Naive thymus-derived CD4-positive, alpha-beta T cell (primary cell): ENCODE measurements at regions of chr11 and their contacts with region 1.

Region 1: GRCh38 chr11:94504689-94505293 is 7.5 kb upstream of the C11orf97 start:
- DNase-seq: peak in 7 of 9 donors; percentile 15 to 54 (median 47)
- ATAC-seq: peak; percentile 70
- H3K4me3 ChIP-seq: no peak overlapping the region
- H3K4me3 Mint-ChIP-seq: no peak overlapping the region
- H3K27ac ChIP-seq: no peak overlapping the region
- H3K27ac Mint-ChIP-seq: no peak overlapping the region
- H3K4me1 ChIP-seq: no peaks in the 10 kb centered on the region
- H3K4me1 Mint-ChIP-seq: peaks cover 0 to 4% (median 0%) of the 10 kb centered on the region in 7 donors
- H3K27me3 ChIP-seq: peaks cover 0 to 3% of the 10 kb centered on the region in 2 donors
- H3K27me3 Mint-ChIP-seq: peaks cover 0 to 21% (median 3%) of the 10 kb centered on the region in 5 donors

Region 2: DNA sequence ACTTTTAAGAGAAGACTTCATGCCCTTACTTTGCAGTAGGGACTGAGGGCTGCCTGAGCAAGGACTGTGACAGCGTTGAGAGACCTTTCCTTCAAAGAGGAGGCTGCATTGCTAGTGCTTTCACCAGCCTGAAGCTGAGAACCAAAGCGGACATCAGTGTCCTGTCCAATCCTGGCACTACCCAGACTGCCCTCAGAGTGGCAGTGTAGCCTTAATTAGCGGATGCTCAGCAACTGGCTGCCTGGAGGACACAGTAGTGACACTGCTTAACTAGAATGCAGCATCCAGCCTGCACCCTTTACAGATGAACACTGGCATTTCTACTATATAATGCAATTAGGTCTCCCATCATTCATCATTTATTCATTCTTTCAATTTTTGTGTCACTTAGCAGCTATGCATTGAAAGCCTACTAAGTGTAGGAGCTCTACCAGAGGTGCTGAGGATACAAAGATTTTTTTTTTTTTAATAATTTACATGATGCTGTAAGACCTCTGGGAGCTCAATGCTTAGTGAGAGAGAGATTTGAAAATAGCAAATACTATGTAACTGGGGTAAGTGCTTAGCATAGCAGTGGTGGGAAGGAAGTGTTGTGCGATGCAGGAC is 1270.1 kb before region 1 on chr11:
- CTCF ChIA-PET with region 1: interaction called, 4 read pairs
- POLR2A ChIA-PET with region 1: no interaction called
- intact Hi-C with region 1: loop called (anchors 1 to 10 kb)
- DNase-seq: peak; percentile 16 to 62 (median 50)
- ATAC-seq: peak; percentile 97
- H3K4me3 ChIP-seq: no peak overlapping the region
- H3K4me3 Mint-ChIP-seq: no peak overlapping the region
- H3K27ac ChIP-seq: no peak overlapping the region
- H3K27ac Mint-ChIP-seq: no peak overlapping the region
- H3K4me1 ChIP-seq: no peaks in the 10 kb centered on the region
- H3K4me1 Mint-ChIP-seq: no peaks in the 10 kb centered on the region
- H3K27me3 ChIP-seq: no peaks in the 10 kb centered on the region
- H3K27me3 Mint-ChIP-seq: peaks cover 27 to 46% (median 40%) of the 10 kb centered on the region in 5 donors

Region 3: DNA sequence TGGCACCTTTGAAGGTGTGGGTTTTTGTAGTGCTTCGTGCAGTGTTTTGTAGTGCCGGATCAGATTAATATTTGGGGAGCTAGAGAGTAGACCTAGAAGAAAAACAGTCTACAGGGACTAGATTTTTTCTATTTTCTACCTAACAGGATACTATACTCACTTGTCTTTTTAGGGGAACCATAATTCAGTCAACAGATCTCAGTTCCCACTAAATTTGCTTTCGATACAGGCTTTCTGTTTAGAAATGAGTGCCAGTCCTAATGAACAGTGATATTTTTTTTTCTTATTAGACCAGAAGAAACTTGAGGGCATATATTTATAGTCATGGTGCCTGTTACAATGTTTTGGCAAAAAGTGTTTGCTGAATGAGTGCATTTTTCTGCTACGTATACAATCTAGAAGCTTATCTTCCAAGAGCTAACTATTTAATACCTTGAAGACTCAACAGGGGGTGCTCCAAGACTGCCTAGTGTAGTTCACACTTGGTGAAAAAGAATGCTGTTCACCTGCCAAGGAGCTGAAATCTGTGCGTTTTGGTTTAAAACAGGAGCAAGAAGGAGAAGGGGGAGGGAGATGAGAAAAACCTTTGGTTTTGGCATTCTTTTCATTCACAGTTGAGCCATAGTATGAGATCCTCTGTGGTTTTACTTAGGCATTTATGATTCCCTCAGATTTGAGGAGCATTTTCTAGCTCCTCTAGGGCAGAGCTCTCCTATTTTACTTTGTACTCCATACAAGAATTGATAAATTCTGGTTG is 609.5 kb before region 1 on chr11:
- CTCF ChIA-PET with region 1: interaction called, 5 read pairs
- POLR2A ChIA-PET with region 1: no interaction called
- intact Hi-C with region 1: loop called in 1 of 2 experiments (anchors 1 kb)
- DNase-seq: peak in 6 of 9 donors; percentile 7 to 35 (median 25)
- ATAC-seq: peak; percentile 60
- H3K4me3 ChIP-seq: no peak overlapping the region
- H3K4me3 Mint-ChIP-seq: no peak overlapping the region
- H3K27ac ChIP-seq: no peak overlapping the region
- H3K27ac Mint-ChIP-seq: no peak overlapping the region
- H3K4me1 ChIP-seq: no peaks in the 10 kb centered on the region
- H3K4me1 Mint-ChIP-seq: no peaks in the 10 kb centered on the region
- H3K27me3 ChIP-seq: no peaks in the 10 kb centered on the region
- H3K27me3 Mint-ChIP-seq: peaks cover 25 to 71% (median 67%) of the 10 kb centered on the region in 5 donors

Region 4: DNA sequence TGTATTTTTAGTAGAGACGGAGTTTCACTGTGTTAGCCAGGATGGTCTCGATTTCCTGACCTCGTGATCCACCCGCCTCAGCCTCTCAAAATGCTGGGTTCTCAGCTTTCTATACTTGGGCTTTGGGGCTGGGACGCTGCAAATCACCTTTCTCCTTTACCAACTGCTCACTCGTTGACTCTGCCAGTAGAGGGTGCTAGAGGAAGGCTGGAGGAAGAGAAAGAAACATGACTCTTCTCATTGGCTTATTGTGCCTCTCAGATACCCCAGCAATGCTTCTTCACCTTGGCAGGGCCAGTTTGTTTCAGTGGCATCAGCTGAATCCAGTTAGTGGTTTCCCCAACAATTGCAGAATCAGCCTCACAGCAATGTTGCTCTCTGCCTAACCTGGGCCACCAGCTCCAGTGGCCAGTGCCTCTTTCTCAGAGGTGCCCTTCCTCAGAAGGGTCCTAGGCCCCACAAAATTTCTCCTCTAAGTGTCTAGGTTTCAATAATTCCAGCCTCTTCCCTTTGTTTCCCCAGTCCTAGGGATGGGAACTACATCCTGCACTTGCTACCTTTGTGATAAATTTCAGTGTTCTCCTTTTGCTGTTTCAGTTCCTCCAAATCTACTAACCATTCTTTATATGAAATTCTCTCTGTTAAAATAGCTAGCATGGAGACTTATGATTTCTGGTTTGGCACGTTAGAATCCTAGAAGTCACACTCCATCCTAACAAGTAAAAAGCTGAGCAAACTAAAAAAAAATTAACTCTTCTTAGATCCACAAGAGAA is 582.9 kb before region 1 on chr11:
- CTCF ChIA-PET with region 1: no interaction called
- POLR2A ChIA-PET with region 1: no interaction called
- intact Hi-C with region 1: loop called in 1 of 2 experiments (anchors 1 kb)
- DNase-seq: peak in 2 of 9 donors; percentile 0 to 24
- ATAC-seq: no peak
- H3K4me3 ChIP-seq: no peak overlapping the region
- H3K4me3 Mint-ChIP-seq: no peak overlapping the region
- H3K27ac ChIP-seq: no peak overlapping the region
- H3K27ac Mint-ChIP-seq: no peak overlapping the region
- H3K4me1 ChIP-seq: no peaks in the 10 kb centered on the region
- H3K4me1 Mint-ChIP-seq: no peaks in the 10 kb centered on the region
- H3K27me3 ChIP-seq: peaks cover 0 to 11% of the 10 kb centered on the region in 2 donors
- H3K27me3 Mint-ChIP-seq: peaks cover 10 to 57% (median 44%) of the 10 kb centered on the region in 5 donors

Region 5: DNA sequence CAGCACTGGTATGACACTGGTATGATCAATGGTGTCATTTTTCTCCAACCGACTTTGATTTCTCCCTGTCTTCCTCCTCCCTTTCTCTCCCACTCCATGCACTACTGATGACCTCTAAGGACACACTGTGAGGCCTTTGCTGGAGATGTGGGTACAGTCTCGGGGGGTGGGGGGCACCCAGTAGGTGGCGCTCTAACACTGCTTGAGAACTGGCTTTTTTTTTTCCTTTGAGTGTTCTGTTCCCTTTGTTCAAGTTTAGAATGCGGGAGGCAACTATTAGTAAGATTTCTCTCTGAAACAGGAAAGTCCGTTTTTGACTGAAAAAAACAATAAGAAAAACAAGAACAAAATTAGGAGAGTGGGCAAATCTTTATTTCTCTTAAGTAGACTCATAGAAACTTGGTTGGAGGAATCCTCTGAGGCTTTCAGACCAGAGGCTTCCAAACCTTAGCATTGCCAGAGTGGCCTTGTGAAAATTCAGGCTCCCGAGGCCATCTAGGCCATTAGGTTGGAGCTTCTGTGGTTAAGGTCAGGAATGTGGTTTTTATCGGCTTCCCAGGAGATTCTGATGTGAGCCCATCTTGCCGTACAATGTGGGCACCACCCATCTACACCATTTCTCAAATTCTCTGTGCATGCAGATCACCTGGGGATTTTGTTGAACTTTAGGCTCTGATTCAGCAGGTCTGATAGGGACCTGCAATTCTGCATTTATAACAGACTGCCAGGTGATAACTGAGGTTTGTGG is 332.9 kb before region 1 on chr11:
- CTCF ChIA-PET with region 1: no interaction called
- POLR2A ChIA-PET with region 1: no interaction called
- intact Hi-C with region 1: loop called (anchors 2 kb)
- DNase-seq: no peak
- ATAC-seq: peak; percentile 65
- H3K4me3 ChIP-seq: no peak overlapping the region
- H3K4me3 Mint-ChIP-seq: no peak overlapping the region
- H3K27ac ChIP-seq: no peak overlapping the region
- H3K27ac Mint-ChIP-seq: peak overlapping the region in 1 of 9 donors; percentile 74
- H3K4me1 ChIP-seq: no peaks in the 10 kb centered on the region
- H3K4me1 Mint-ChIP-seq: peaks cover 10 to 52% (median 20%) of the 10 kb centered on the region in 7 donors
- H3K27me3 ChIP-seq: no peaks in the 10 kb centered on the region
- H3K27me3 Mint-ChIP-seq: no peaks in the 10 kb centered on the region

Region 6: GRCh38 chr11:94325681-94326080 is 179.1 kb before region 1 on chr11:
- CTCF ChIA-PET with region 1: no interaction called
- POLR2A ChIA-PET with region 1: no interaction called
- intact Hi-C with region 1: loop called in 1 of 2 experiments (anchors 1 kb)
- DNase-seq: peak in 3 of 9 donors; percentile 4 to 55 (median 5)
- ATAC-seq: peak; percentile 72
- H3K4me3 ChIP-seq: no peak overlapping the region
- H3K4me3 Mint-ChIP-seq: no peak overlapping the region
- H3K27ac ChIP-seq: no peak overlapping the region
- H3K27ac Mint-ChIP-seq: no peak overlapping the region
- H3K4me1 ChIP-seq: no peaks in the 10 kb centered on the region
- H3K4me1 Mint-ChIP-seq: peaks cover 0 to 1% (median 0%) of the 10 kb centered on the region in 7 donors
- H3K27me3 ChIP-seq: no peaks in the 10 kb centered on the region
- H3K27me3 Mint-ChIP-seq: peaks cover 0 to 13% (median 5%) of the 10 kb centered on the region in 5 donors

Region 7: GRCh38 chr11:94486068-94486467 is 18.7 kb before region 1 on chr11:
- CTCF ChIA-PET with region 1: interaction called, 3 read pairs
- POLR2A ChIA-PET with region 1: no interaction called
- intact Hi-C with region 1: loop called in 1 of 2 experiments (anchors 2 kb)
- DNase-seq: no peak
- ATAC-seq: no peak
- H3K4me3 ChIP-seq: no peak overlapping the region
- H3K4me3 Mint-ChIP-seq: no peak overlapping the region
- H3K27ac ChIP-seq: no peak overlapping the region
- H3K27ac Mint-ChIP-seq: no peak overlapping the region
- H3K4me1 ChIP-seq: no peaks in the 10 kb centered on the region
- H3K4me1 Mint-ChIP-seq: peaks cover 4 to 22% (median 15%) of the 10 kb centered on the region in 7 donors
- H3K27me3 ChIP-seq: no peaks in the 10 kb centered on the region
- H3K27me3 Mint-ChIP-seq: no peaks in the 10 kb centered on the region

Region 8: GRCh38 chr11:94613120-94613519 is 108.3 kb after region 1 on chr11:
- CTCF ChIA-PET with region 1: no interaction called
- POLR2A ChIA-PET with region 1: no interaction called
- intact Hi-C with region 1: no loop called
- DNase-seq: no peak
- ATAC-seq: no peak
- H3K4me3 ChIP-seq: no peak overlapping the region
- H3K4me3 Mint-ChIP-seq: peak overlapping the region in 1 of 10 donors; percentile 16
- H3K27ac ChIP-seq: no peak overlapping the region
- H3K27ac Mint-ChIP-seq: no peak overlapping the region
- H3K4me1 ChIP-seq: no peaks in the 10 kb centered on the region
- H3K4me1 Mint-ChIP-seq: no peaks in the 10 kb centered on the region
- H3K27me3 ChIP-seq: no peaks in the 10 kb centered on the region
- H3K27me3 Mint-ChIP-seq: no peaks in the 10 kb centered on the region

Region 9: GRCh38 chr11:94623120-94623735 is 118.4 kb after region 1 on chr11:
- CTCF ChIA-PET with region 1: no interaction called
- POLR2A ChIA-PET with region 1: no interaction called
- intact Hi-C with region 1: no loop called
- DNase-seq: peak in 8 of 9 donors; percentile 33 to 68 (median 55)
- ATAC-seq: peak; percentile 91
- H3K4me3 ChIP-seq: no peak overlapping the region
- H3K4me3 Mint-ChIP-seq: no peak overlapping the region
- H3K27ac ChIP-seq: no peak overlapping the region
- H3K27ac Mint-ChIP-seq: peak overlapping the region in 1 of 9 donors; percentile 2
- H3K4me1 ChIP-seq: no peaks in the 10 kb centered on the region
- H3K4me1 Mint-ChIP-seq: peaks cover 0 to 2% (median 0%) of the 10 kb centered on the region in 7 donors
- H3K27me3 ChIP-seq: no peaks in the 10 kb centered on the region
- H3K27me3 Mint-ChIP-seq: peaks cover 5 to 18% (median 13%) of the 10 kb centered on the region in 5 donors